ENCODE measurements at regions of chr5 and their contacts with region 1.

Region 1: DNA sequence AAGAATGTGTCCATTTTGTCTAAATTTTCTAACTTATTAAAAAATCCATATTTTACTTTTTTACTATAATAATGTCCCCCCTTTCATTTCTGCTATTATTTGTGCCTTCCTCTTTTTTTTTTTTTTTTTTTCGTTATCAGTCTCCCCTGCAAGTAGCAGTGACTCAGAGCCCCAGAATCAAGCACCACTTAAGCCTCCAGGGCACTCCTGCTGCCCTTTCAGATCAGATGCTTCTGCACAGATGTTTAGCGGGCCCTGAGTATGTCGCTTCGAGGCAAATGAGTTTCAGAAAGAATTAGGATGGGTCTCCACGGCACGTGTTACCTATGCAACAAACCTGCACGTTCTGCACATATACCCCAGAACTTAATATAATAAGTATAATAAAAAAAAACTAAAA is 11.7 kb downstream of the MED7 start:
- DNase-seq: peak in 1 of 5 donors; percentile 39
- ATAC-seq: peak in 3 of 4 donors; percentile 52 to 73 (median 64)
- H3K4me3 ChIP-seq: no peak overlapping the region
- H3K27ac ChIP-seq: no peak overlapping the region
- H3K4me1 ChIP-seq: peaks cover 0 to 12% (median 2%) of the 10 kb centered on the region in 12 donors
- H3K27me3 ChIP-seq: no peaks in the 10 kb centered on the region
- CTCF ChIP-seq: no peak
- POLR2A ChIP-seq: no peak

Region 2: GRCh38 chr5:155943516-155944407 is 1187.2 kb before region 1 on chr5:
- intact Hi-C with region 1: loop called in 1 of 10 experiments (anchors 10 kb)
- DNase-seq: peak in 4 of 5 donors; percentile 28 to 50 (median 40)
- ATAC-seq: peak; percentile 64 to 93 (median 76)
- H3K4me3 ChIP-seq: no peak overlapping the region
- H3K27ac ChIP-seq: no peak overlapping the region
- H3K4me1 ChIP-seq: peaks cover 0 to 10% (median 0%) of the 10 kb centered on the region in 12 donors
- H3K27me3 ChIP-seq: no peaks in the 10 kb centered on the region
- CTCF ChIP-seq: peak; percentile 51 to 81 (median 72)
- POLR2A ChIP-seq: no peak

Region 3: GRCh38 chr5:156835905-156836304 is 295.0 kb before region 1 on chr5:
- intact Hi-C with region 1: loop called in 2 of 10 experiments (anchors 5 to 10 kb)
- DNase-seq: no peak
- ATAC-seq: no peak
- H3K4me3 ChIP-seq: no peak overlapping the region
- H3K27ac ChIP-seq: no peak overlapping the region
- H3K4me1 ChIP-seq: no peaks in the 10 kb centered on the region
- H3K27me3 ChIP-seq: no peaks in the 10 kb centered on the region
- CTCF ChIP-seq: peak in 3 of 12 donors; percentile 9 to 24 (median 13)
- POLR2A ChIP-seq: no peak

Region 4: GRCh38 chr5:157172403-157172802 is 41.5 kb after region 1 on chr5:
- intact Hi-C with region 1: no loop called
- DNase-seq: no peak
- ATAC-seq: no peak
- H3K4me3 ChIP-seq: no peak overlapping the region
- H3K27ac ChIP-seq: peak overlapping the region in 1 of 12 donors; percentile 37
- H3K4me1 ChIP-seq: no peaks in the 10 kb centered on the region
- H3K27me3 ChIP-seq: peaks cover 0 to 7% (median 0%) of the 10 kb centered on the region in 9 donors
- CTCF ChIP-seq: no peak
- POLR2A ChIP-seq: no peak

Measured in heart left ventricle (tissue), 16 donors.